ENCODE measurements at regions of chr4 and their contacts with region 1.

Region 1: DNA sequence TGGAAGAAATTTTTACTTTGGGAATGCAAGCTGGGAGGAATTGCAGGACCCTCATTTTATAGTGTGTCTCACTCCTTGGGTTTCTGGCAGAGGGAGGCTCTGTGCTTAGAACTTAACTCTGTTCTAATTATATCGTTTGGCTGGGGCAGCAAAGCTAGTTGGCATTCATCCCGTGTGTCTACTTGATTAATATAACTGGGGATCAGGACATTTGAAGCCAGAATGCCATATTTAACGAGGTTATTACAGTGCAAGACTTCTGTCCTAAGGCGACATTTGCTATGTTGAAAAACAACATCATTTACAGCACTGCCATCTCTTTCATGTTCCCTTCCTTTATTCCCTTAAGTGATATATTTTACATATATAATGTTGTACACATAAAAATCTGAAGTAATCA is 179.1 kb upstream of the TBC1D9 start:
- DNase-seq: no peak
- H3K4me3 ChIP-seq: no peak overlapping the region
- H3K27ac ChIP-seq: no peak overlapping the region
- H3K4me1 ChIP-seq: no peaks in the 10 kb centered on the region
- H3K27me3 ChIP-seq: no peaks in the 10 kb centered on the region
- CTCF ChIP-seq: no peak
- POLR2A ChIP-seq: no peak

Region 2: GRCh38 chr4:140996766-140997165 is 61.5 kb after region 1 on chr4:
- intact Hi-C with region 1: loop called (anchors 10 kb)
- DNase-seq: no peak
- H3K4me3 ChIP-seq: no peak overlapping the region
- H3K27ac ChIP-seq: no peak overlapping the region
- H3K4me1 ChIP-seq: no peaks in the 10 kb centered on the region
- H3K27me3 ChIP-seq: no peaks in the 10 kb centered on the region
- CTCF ChIP-seq: peak in 1 of 4 experiments; percentile 15
- POLR2A ChIP-seq: no peak

Measured in prostate gland (tissue), 2 donors.